ENCODE measurements at regions of chr13 and their contacts with region 1.

Region 1: DNA sequence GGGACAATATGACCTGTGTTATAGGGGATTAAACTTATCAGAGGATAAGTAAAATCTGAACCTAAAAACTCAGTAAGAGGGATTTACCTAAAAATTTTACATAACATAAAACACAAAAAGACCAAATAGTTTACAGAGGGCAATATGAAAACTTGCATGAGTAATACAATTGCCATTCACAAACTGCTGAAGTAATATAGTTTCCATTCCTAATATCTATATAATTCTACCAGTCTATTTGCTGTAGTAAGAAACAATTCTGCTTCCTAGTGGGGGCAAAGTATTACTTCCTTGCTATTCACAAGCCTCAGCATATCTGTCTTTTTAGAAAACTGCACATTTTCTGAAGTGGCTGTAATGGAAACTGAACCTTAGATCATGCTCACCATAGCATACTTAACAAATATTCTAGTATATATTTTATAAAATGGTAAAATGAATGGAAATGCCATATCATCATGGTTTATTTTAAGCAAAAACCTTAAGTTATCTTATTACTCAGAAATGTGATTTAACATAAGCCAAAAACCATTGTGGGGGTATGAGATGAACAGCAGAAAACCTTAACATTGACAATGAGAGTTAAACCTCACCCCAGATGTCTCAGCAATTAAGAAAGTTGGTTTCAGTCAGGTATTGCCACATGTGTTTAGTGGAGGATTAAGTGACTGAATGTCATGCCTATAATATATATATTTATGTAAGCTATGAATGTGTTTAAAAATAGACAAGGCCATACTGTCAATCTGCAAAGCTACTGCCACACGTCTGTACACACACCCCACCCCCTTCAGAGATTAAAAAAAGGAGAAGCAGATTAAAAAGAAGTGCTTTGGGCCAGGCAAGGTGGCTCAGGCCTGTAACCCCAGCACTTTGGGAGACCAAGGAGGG is 136.8 kb downstream of the MIPEP start:
- DNase-seq: peak; percentile 35
- ATAC-seq: no peak
- H3K4me3 ChIP-seq: no peak overlapping the region
- H3K27ac ChIP-seq: peak overlapping the region; percentile 100
- H3K4me1 ChIP-seq: peaks cover 72% of the 10 kb centered on the region
- H3K27me3 ChIP-seq: no peaks in the 10 kb centered on the region
- CTCF ChIP-seq: no peak

Region 2: GRCh38 chr13:23828866-23829265 is 76.5 kb after region 1 on chr13:
- CTCF ChIA-PET with region 1: no interaction called
- POLR2A ChIA-PET with region 1: no interaction called
- intact Hi-C with region 1: no loop called
- DNase-seq: no peak
- ATAC-seq: no peak
- H3K4me3 ChIP-seq: no peak overlapping the region
- H3K27ac ChIP-seq: no peak overlapping the region
- H3K4me1 ChIP-seq: no peaks in the 10 kb centered on the region
- H3K27me3 ChIP-seq: no peaks in the 10 kb centered on the region
- CTCF ChIP-seq: no peak

Region 3: GRCh38 chr13:23871616-23872220 is 119.4 kb after region 1 on chr13:
- CTCF ChIA-PET with region 1: no interaction called
- POLR2A ChIA-PET with region 1: no interaction called
- intact Hi-C with region 1: loop called (anchors 2 kb)
- DNase-seq: peak; percentile 58
- ATAC-seq: no peak
- H3K4me3 ChIP-seq: no peak overlapping the region
- H3K27ac ChIP-seq: peak overlapping the region; percentile 62
- H3K4me1 ChIP-seq: peaks cover 44% of the 10 kb centered on the region
- H3K27me3 ChIP-seq: no peaks in the 10 kb centered on the region
- CTCF ChIP-seq: peak; percentile 74

Region 4: GRCh38 chr13:24135674-24136300 is 383.4 kb after region 1 on chr13:
- CTCF ChIA-PET with region 1: no interaction called
- POLR2A ChIA-PET with region 1: no interaction called
- intact Hi-C with region 1: no loop called
- DNase-seq: peak; percentile 48
- ATAC-seq: peak; percentile 45
- H3K4me3 ChIP-seq: no peak overlapping the region
- H3K27ac ChIP-seq: peak overlapping the region; percentile 11
- H3K4me1 ChIP-seq: peaks cover 5% of the 10 kb centered on the region; the same call in 1 of the 2 replicates
- H3K27me3 ChIP-seq: no peaks in the 10 kb centered on the region
- CTCF ChIP-seq: no peak

Measured in PC-3 (cell line).